Endothelial cell of umbilical vein (primary cell): ENCODE measurements at regions of chr4 and their contacts with region 1.

Region 1: GRCh38 chr4:30719460-30720020 is 629 bp upstream of the PCDH7 start:
- DNase-seq: peak; percentile 80
- H3K4me3 ChIP-seq: peak overlapping the region; percentile 34 to 53 (median 47)
- H3K27ac ChIP-seq: peak overlapping the region; percentile 57
- H3K4me1 ChIP-seq: peaks cover 35% of the 10 kb centered on the region
- H3K27me3 ChIP-seq: no peaks in the 10 kb centered on the region
- CTCF ChIP-seq: no peak
- POLR2A ChIP-seq: peak; percentile 28

Region 2: DNA sequence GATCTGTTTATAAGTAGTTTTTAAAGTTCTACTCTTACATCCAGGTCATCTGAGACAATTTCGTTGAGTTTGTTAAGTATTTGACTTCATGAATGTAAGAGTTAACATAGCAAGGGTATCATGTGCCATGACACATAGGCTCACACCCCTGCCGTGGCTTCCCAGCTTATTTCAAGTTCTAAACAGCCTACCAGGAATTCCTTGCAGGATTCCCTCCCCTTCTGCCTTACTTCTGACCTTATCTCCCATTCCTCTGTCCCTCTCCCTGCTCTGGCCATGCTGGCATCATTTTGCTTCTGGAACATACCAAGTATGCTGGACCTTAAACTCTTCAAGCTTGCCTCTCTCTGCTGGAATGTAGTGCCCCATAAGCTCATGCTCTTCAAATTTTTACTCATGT is 369.3 kb before region 1 on chr4:
- CTCF ChIA-PET with region 1: no interaction called
- POLR2A ChIA-PET with region 1: no interaction called
- dilution Hi-C with region 1: no loop called
- intact Hi-C with region 1: no loop called
- DNase-seq: no peak
- H3K4me3 ChIP-seq: no peak overlapping the region
- H3K27ac ChIP-seq: no peak overlapping the region
- H3K4me1 ChIP-seq: no peaks in the 10 kb centered on the region
- H3K27me3 ChIP-seq: no peaks in the 10 kb centered on the region
- CTCF ChIP-seq: no peak
- POLR2A ChIP-seq: no peak

Region 3: DNA sequence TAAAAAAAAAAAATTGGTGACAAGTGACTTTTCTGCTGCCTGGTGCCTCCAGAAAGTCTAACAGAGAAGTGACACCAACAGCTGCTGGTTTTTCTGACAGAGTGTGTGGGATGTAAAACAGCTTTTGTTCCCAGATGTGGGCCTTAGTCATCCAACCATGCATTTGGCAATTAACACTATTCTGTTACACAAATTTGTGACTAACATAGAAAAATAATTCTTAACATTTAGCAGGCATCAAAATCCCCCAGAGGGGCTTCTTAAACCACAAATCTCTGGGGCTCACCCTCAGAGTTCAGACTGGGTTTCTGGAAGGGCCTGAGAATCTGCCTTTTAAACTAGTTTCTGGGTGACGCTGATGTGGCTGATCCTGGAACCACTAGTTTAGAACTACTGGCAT is 99.9 kb before region 1 on chr4:
- CTCF ChIA-PET with region 1: no interaction called
- POLR2A ChIA-PET with region 1: no interaction called
- dilution Hi-C with region 1: no loop called
- intact Hi-C with region 1: no loop called
- DNase-seq: no peak
- H3K4me3 ChIP-seq: no peak overlapping the region
- H3K27ac ChIP-seq: no peak overlapping the region
- H3K4me1 ChIP-seq: no peaks in the 10 kb centered on the region
- H3K27me3 ChIP-seq: no peaks in the 10 kb centered on the region
- CTCF ChIP-seq: no peak
- POLR2A ChIP-seq: no peak

Region 4: GRCh38 chr4:30863021-30863420 is 143.5 kb after region 1 on chr4:
- CTCF ChIA-PET with region 1: interaction called, 3 read pairs
- POLR2A ChIA-PET with region 1: no interaction called
- dilution Hi-C with region 1: no loop called
- intact Hi-C with region 1: loop called (anchors 1 kb)
- DNase-seq: peak; percentile 80
- H3K4me3 ChIP-seq: no peak overlapping the region
- H3K27ac ChIP-seq: peak overlapping the region; percentile 31
- H3K4me1 ChIP-seq: peaks cover 12% of the 10 kb centered on the region
- H3K27me3 ChIP-seq: no peaks in the 10 kb centered on the region
- CTCF ChIP-seq: no peak
- POLR2A ChIP-seq: no peak

Region 5: GRCh38 chr4:31539284-31540074 is 819.9 kb after region 1 on chr4:
- CTCF ChIA-PET with region 1: no interaction called
- POLR2A ChIA-PET with region 1: no interaction called
- dilution Hi-C with region 1: no loop called
- intact Hi-C with region 1: loop called (anchors 1 kb)
- DNase-seq: no peak
- H3K4me3 ChIP-seq: no peak overlapping the region
- H3K27ac ChIP-seq: no peak overlapping the region
- H3K4me1 ChIP-seq: peaks cover 16% of the 10 kb centered on the region
- H3K27me3 ChIP-seq: no peaks in the 10 kb centered on the region
- CTCF ChIP-seq: no peak
- POLR2A ChIP-seq: no peak